BJ (cell line): ENCODE measurements at regions of chrX and their contacts with region 1.

Region 1: GRCh38 chrX:19964017-19964710 is 26.7 kb downstream of the BCLAF3 start:
- DNase-seq: no peak
- H3K4me3 ChIP-seq: no peak overlapping the region
- H3K27me3 ChIP-seq: no peaks in the 10 kb centered on the region
- CTCF ChIP-seq: no peak

Region 2: DNA sequence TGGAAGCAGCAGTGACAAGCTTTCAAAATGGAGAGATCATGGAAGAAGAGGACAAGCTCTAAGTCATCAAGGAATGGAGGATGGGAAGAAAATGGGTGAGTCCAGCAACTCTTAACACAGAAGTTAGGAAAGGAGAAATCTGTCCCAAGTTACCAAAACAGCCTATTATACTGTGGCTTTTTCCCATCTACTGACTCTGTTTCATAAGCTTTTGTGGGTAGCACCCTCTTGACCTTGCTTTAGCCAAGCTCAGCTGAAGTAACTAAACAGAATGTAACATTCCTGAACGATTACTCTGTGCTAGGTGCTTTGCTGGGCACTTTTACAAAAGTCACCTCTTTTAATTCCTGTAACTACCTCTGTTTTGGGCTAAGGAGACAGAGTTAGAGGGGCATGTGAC is 97.7 kb after region 1 on chrX:
- CTCF ChIA-PET with region 1: no interaction called
- POLR2A ChIA-PET with region 1: interaction called, 10 read pairs
- DNase-seq: no peak
- H3K4me3 ChIP-seq: no peak overlapping the region
- H3K27me3 ChIP-seq: no peaks in the 10 kb centered on the region
- CTCF ChIP-seq: no peak